GM23248 (cell line): ENCODE measurements at regions of chr5 and their contacts with region 1.

Region 1: DNA sequence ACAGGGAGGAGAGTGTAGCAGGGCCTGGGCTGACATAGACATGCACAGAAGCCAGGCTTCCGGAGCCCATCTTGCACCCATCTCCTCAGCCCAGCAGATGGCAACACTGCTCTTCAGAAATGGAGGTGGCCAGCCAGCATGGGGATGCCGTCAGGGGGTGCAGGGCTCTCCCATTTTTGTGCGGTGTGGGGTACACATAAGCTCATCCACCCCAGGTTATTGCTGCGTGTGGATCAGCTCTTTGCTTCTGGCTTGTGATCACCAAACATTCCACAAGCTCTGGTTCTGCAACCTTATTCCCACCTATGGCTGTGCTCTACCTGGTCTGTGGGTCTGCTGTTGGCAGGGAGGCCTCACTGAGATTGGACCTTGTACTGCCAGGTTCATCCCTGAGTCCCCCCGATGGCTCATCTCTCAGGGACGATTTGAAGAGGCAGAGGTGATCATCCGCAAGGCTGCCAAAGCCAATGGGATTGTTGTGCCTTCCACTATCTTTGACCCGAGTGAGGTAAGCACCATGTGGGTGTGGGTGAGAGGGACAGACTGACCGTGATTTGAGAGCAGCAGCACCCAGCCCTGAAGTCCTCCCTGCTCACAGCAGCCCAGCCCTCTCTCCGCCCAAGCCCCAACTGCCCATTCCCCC is 17.3 kb downstream of the SLC22A5 start:
- DNase-seq: peak; percentile 87
- H3K4me3 ChIP-seq: no peak overlapping the region
- H3K27ac ChIP-seq: peak overlapping the region; percentile 90
- H3K4me1 ChIP-seq: peaks cover 37% of the 10 kb centered on the region
- H3K27me3 ChIP-seq: no peaks in the 10 kb centered on the region

Region 2: GRCh38 chr5:132500931-132501630 is 114.3 kb after region 1 on chr5:
- in situ Hi-C with region 1: loop called (anchors 10 kb)
- DNase-seq: peak; percentile 61
- H3K4me3 ChIP-seq: no peak overlapping the region
- H3K27ac ChIP-seq: no peak overlapping the region
- H3K4me1 ChIP-seq: peaks cover 27% of the 10 kb centered on the region
- H3K27me3 ChIP-seq: no peaks in the 10 kb centered on the region

Region 3: GRCh38 chr5:132714456-132715307 is 327.9 kb after region 1 on chr5:
- in situ Hi-C with region 1: loop called (anchors 25 kb)
- DNase-seq: peak; percentile 42
- H3K4me3 ChIP-seq: no peak overlapping the region
- H3K27ac ChIP-seq: no peak overlapping the region
- H3K4me1 ChIP-seq: 0 out of 2 replicates have a peak, but pooled peaks cover 8% of the 10 kb centered on the region
- H3K27me3 ChIP-seq: no peaks in the 10 kb centered on the region

Region 4: GRCh38 chr5:132820162-132820754 is 433.5 kb after region 1 on chr5:
- in situ Hi-C with region 1: loop called (anchors 25 kb)
- DNase-seq: peak; percentile 92
- H3K4me3 ChIP-seq: no peak overlapping the region
- H3K27ac ChIP-seq: no peak overlapping the region
- H3K4me1 ChIP-seq: peaks cover 7% of the 10 kb centered on the region; the same call in 1 of the 2 replicates
- H3K27me3 ChIP-seq: no peaks in the 10 kb centered on the region